Mammary epithelial cell (primary cell): ENCODE measurements at regions of chr5 and their contacts with region 1.

Region 1: GRCh38 chr5:128083033-128083810 is at the start of gene SLC12A2:
- DNase-seq: peak; percentile 94
- H3K4me3 ChIP-seq: peak within 1 kb of the TSS; percentile 69 to 93 (median 88)
- H3K27ac ChIP-seq: peak within 1 kb of the TSS; percentile 89
- H3K4me1 ChIP-seq: peaks cover 13% of the 10 kb centered on the region
- H3K27me3 ChIP-seq: no peaks in the 10 kb centered on the region
- CTCF ChIP-seq: no peak
- total RNA-seq, gene SLC12A2: 24.1 to 50.3 TPM

Region 2: DNA sequence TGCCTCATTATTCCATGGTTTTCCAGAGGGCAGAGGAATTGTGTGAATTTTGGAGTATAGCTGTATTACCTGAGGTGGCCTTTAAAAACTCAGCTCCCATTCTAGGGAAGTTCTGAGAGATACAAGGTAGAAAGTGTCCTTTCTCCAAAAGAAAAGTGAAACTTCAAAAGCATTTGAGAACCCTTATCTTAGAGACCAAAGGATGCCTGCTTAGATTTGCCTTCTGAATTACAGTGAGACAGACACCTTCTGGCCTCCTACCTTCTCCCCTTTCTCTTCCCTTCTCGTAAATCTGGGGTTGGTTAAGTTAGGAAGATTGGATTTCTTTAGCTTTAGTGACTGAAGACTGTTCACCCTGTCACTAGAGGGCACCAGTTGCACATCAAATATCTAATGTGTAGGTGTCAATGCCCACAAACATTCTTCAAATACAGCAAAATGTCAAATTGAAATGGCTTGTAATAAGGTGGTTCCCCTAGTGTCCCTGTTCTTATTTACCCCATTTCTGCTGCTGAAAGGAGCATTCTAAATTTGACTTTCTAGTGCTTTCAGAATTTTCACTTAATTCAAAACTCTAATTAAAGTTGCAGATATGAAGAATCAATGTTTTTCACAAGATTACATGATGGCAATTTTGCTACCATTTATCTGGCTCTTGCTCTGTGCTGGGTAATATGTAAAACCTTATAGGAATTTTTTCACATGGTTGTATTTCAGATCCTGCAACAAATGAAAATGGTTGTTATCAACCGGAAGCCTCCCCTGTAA is 519.0 kb before region 1 on chr5:
- CTCF ChIA-PET with region 1: no interaction called
- dilution Hi-C with region 1: no loop called
- in situ Hi-C with region 1: no loop called
- intact Hi-C with region 1: loop called (anchors 10 kb)
- DNase-seq: peak; percentile 44
- H3K4me3 ChIP-seq: no peak overlapping the region
- H3K27ac ChIP-seq: no peak overlapping the region
- H3K4me1 ChIP-seq: no peaks in the 10 kb centered on the region
- H3K27me3 ChIP-seq: no peaks in the 10 kb centered on the region
- CTCF ChIP-seq: peak; percentile 62 to 73

Region 3: DNA sequence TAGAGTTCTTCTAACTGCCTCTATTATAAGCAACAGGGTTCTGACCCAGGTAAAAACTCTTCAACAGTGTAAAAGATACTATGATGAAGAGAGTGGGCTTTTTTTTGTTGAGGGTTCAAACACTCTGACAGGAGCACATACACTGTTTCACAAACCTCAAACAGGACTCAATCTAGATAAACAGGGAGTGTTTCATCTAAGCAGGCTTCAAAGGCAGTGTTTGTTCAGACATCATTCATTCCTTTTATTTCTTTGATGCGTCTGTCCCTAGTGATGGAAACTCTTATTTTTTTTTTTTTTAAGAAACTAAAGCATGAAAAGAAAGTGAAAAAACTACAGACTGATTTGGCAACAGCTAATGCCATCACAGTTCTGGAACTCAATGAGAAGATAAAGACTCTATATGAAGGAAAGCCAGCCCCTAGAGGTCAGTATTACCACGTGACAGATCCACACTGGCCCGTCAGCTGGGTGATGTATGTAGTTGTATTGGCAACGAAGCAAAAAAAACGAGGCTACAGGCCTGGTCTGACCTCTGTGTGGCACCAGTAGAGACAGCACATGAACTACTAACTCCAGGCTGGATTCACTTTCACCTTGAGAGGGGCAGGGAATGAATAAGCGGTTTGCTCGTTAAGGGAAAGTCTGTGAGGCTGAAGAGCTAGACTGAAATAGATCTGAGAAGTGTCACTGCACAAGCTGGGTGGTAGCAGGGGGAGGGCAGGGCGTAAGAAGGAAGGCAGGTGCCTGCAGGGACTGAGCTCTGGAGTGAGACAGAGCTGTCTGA is 207.8 kb before region 1 on chr5:
- CTCF ChIA-PET with region 1: interaction called, 4 read pairs
- dilution Hi-C with region 1: no loop called
- in situ Hi-C with region 1: loop called in 1 of 2 experiments (anchors 10 kb)
- intact Hi-C with region 1: loop called (anchors 1 kb)
- DNase-seq: peak; percentile 51
- H3K4me3 ChIP-seq: no peak overlapping the region
- H3K27ac ChIP-seq: no peak overlapping the region
- H3K4me1 ChIP-seq: peaks cover 18% of the 10 kb centered on the region
- H3K27me3 ChIP-seq: no peaks in the 10 kb centered on the region
- CTCF ChIP-seq: peak; percentile 10 to 18

Region 4: GRCh38 chr5:127909078-127909477 is 174.1 kb before region 1 on chr5:
- CTCF ChIA-PET with region 1: no interaction called
- dilution Hi-C with region 1: no loop called
- in situ Hi-C with region 1: no loop called
- intact Hi-C with region 1: loop called (anchors 1 kb)
- DNase-seq: peak; percentile 48
- H3K4me3 ChIP-seq: no peak overlapping the region
- H3K27ac ChIP-seq: no peak overlapping the region
- H3K4me1 ChIP-seq: no peaks in the 10 kb centered on the region
- H3K27me3 ChIP-seq: no peaks in the 10 kb centered on the region
- CTCF ChIP-seq: peak; percentile 78 to 86

Region 5: DNA sequence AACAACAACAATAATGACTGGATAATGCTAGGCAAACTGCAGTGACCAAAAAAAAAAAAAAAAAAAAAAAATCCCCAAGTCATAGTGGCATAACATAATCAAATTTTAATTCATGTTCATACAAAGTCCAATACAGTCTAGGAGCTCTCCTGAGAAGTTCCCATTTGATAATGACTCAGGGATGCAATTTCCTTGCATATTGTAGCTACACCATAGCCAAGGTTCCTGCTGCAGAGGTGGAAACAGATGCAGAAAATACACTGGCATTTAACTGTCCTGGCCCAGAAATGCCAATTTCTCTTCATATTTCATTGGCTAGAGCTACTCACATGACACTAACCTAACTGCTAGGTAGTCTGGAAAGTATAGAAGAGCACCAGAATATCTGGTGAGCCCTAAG is 71.9 kb before region 1 on chr5:
- CTCF ChIA-PET with region 1: interaction called, 38 read pairs
- dilution Hi-C with region 1: no loop called
- in situ Hi-C with region 1: no loop called
- intact Hi-C with region 1: no loop called
- DNase-seq: no peak
- H3K4me3 ChIP-seq: no peak overlapping the region
- H3K27ac ChIP-seq: no peak overlapping the region
- H3K4me1 ChIP-seq: no peaks in the 10 kb centered on the region
- H3K27me3 ChIP-seq: no peaks in the 10 kb centered on the region
- CTCF ChIP-seq: no peak

Region 6: DNA sequence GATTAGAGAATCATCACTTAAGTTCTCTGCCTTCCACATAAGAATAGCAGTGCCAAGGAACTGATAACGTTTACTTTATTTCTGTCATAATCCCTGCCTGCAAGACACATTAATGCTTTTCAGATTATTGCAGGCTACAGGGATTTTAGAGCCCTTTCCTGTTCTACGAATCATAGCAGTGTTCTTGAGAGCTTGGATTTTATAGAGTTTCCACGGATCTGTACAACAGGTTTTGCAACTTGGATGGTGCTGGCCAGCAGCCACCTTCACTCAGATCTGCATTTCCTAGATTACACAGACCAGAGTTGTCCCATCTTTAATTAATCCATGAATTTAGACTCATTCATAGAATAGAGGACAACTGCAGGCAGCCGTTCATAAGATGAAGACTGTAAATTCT is 38.4 kb after region 1 on chr5:
- CTCF ChIA-PET with region 1: no interaction called
- dilution Hi-C with region 1: no loop called
- in situ Hi-C with region 1: no loop called
- intact Hi-C with region 1: no loop called
- DNase-seq: peak; percentile 58
- H3K4me3 ChIP-seq: no peak overlapping the region
- H3K27ac ChIP-seq: no peak overlapping the region
- H3K4me1 ChIP-seq: peaks cover 6% of the 10 kb centered on the region
- H3K27me3 ChIP-seq: no peaks in the 10 kb centered on the region
- CTCF ChIP-seq: no peak

Region 7: DNA sequence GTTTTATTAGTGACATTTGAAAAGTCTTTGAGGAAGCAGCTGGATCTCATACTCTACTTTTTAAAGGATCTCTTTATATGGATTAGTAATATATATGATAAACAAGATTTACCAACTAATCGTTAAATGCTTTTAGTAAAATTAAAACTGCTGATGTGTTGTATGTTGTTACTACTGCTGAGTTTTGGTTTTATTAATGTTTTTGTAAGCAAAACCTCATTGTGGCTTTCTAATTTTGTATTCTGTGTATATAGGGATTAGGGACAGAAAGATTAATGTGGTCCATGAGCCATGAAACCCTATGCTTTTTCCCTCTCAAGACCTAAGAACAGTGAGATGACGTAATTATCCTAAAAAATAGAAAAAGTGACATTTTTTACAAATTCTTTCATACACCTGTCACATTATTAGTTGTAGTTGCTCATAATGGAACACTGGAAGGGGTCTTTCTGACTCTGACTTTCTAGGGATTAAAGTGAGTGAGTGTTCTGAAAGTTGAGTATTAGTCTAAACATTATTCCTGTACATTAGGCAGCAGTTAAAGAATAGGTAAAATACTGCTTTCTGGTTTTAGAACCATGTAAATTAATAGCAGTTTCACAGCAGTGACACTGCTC is 86.3 kb after region 1 on chr5:
- CTCF ChIA-PET with region 1: no interaction called
- dilution Hi-C with region 1: no loop called
- in situ Hi-C with region 1: no loop called
- intact Hi-C with region 1: no loop called
- DNase-seq: no peak
- H3K4me3 ChIP-seq: no peak overlapping the region
- H3K27ac ChIP-seq: no peak overlapping the region
- H3K4me1 ChIP-seq: no peaks in the 10 kb centered on the region
- H3K27me3 ChIP-seq: no peaks in the 10 kb centered on the region
- CTCF ChIP-seq: no peak

Region 8: GRCh38 chr5:128315671-128316070 is 232.4 kb after region 1 on chr5:
- CTCF ChIA-PET with region 1: no interaction called
- dilution Hi-C with region 1: no loop called
- in situ Hi-C with region 1: no loop called
- intact Hi-C with region 1: no loop called
- DNase-seq: peak; percentile 78
- H3K4me3 ChIP-seq: no peak overlapping the region
- H3K27ac ChIP-seq: no peak overlapping the region
- H3K4me1 ChIP-seq: peaks cover 8% of the 10 kb centered on the region
- H3K27me3 ChIP-seq: no peaks in the 10 kb centered on the region
- CTCF ChIP-seq: no peak